ENCODE measurements at regions of chr1 and their contacts with region 1.

Region 1: GRCh38 chr1:182614796-182615454 is 10.7 kb upstream of the RGS16 start:
- DNase-seq: peak; percentile 73
- H3K4me3 ChIP-seq: peak overlapping the region; percentile 34
- H3K27me3 ChIP-seq: peaks cover 3% of the 10 kb centered on the region; the same call in 1 of the 2 replicates
- CTCF ChIP-seq: no peak

Region 2: DNA sequence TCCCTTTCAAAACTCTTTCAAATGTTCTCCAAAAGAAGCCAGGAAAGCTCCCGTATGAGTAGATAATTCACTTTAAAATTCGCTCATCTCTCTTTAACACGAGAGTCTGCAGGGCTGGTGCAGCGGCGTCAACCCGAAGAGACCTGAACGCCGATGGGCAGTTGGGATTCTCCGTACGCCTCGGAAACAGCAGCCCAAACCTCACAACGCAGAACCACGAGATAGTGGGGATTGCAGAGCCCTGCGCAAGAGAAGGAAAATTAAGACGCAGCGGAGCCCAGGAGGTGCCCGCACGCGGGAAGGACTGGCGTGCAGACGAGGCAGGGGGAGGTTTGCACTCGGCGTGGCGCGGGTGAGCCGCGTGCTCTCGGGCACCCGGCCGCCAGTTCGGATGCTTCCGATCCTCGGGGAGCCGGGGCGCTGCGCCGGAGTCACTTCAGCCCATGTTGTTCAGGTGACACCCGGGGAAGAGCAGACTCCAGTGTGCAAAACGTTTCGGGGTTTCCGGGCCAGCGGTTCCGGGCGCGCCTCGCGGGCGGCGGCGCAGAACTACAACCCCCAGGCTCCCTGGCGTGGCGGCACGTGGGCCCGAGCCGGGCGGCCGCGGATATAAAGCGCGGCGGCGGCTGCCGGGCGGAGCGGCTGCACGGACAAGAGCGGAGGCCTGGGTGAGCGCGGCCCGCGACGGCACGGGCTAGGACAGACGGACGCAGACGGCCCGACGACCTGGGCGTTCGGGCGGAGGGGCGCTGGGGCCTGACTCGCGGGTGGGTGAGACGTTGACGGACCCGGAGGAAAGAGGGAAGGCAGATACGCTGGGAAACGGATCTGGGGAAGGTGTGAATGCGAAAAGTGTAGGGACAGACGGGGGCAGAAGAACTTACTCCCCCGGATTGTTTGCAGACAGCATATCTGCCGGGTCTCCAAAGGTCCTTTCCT is 174.5 kb after region 1 on chr1 and contains the start of gene NPL:
- CTCF ChIA-PET with region 1: interaction called, 34 read pairs
- POLR2A ChIA-PET with region 1: no interaction called
- DNase-seq: no peak
- H3K4me3 ChIP-seq: peak within 1 kb of the TSS; percentile 74
- H3K27me3 ChIP-seq: peaks cover 5% of the 10 kb centered on the region
- CTCF ChIP-seq: no peak
- polyA plus RNA-seq, gene NPL: 1.2 TPM in 2 replicates

Measured in BJ (cell line).